Activated naive CD8-positive, alpha-beta T cell treated with anti-CD3 and anti-CD28 coated beads, Interleukin-2, amount 10 ng/mL, durations not matched to agents 7 days and 5 days (primary cell): ENCODE measurements at regions of chr16 and their contacts with region 1.

Region 1: GRCh38 chr16:84511180-84511824 is 6.8 kb upstream of the MEAK7 start:
- DNase-seq: peak; percentile 92
- ATAC-seq: peak; percentile 12
- H3K4me3 Mint-ChIP-seq: peak overlapping the region; percentile 66
- H3K27ac Mint-ChIP-seq: peak overlapping the region; percentile 81
- H3K4me1 Mint-ChIP-seq: peaks cover 70% of the 10 kb centered on the region
- H3K27me3 Mint-ChIP-seq: no peaks in the 10 kb centered on the region

Region 2: DNA sequence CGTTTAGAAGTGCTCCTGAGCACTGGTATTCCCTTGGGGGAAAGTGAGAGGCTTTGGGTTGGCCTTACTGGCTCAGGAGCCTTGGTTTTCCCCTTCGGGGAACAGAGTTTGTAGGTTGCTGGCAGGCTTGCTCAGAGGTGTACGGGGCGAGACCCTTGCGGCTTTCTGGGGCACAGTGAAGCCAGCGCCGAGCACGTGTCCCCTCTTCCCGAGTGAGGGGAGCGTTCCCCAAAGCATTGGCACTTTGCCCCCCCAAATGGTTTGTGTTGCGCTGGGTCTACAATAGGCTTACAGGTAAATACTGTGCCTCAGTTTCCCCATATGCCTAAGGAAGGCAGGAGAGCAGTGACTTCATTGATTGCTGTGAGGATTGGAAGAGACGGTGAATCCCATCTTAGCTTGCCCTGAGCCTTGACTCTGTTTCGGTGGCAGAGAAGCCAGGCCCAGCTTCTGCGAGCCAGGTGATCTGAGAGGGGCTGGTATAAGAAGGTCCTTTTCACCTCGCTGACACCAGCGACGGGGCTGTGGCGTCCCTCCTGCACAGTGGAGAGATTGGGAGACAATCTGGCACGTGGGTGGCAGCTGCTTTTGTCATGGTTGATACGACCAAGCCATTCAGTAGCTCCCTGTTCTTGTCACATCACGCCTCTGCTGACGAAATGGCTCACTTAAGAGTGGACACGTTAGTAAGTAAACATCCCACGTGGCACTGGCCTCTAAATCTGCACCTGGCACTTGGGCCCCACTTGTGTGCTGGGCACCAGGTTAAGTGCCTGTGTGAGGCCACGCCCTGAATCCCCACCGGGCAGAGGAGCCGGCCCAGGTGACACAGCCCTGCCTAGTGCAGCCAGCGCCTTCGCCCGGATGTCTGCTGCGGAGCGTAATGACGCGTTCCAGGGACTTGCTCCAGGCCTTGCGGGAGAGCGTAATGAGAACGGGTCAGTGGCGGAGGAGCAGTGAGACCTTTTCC is 61.8 kb before region 1 on chr16:
- POLR2A ChIA-PET with region 1: no interaction called
- DNase-seq: peak; percentile 29
- ATAC-seq: no peak
- H3K4me3 Mint-ChIP-seq: no peak overlapping the region
- H3K27ac Mint-ChIP-seq: no peak overlapping the region
- H3K4me1 Mint-ChIP-seq: no peaks in the 10 kb centered on the region
- H3K27me3 Mint-ChIP-seq: peaks cover 9% of the 10 kb centered on the region

Region 3: GRCh38 chr16:84526794-84527503 is 15.6 kb after region 1 on chr16:
- POLR2A ChIA-PET with region 1: interaction called, 11 read pairs
- DNase-seq: no peak
- ATAC-seq: no peak
- H3K4me3 Mint-ChIP-seq: no peak overlapping the region
- H3K27ac Mint-ChIP-seq: peak overlapping the region; percentile 46
- H3K4me1 Mint-ChIP-seq: peaks cover 43% of the 10 kb centered on the region
- H3K27me3 Mint-ChIP-seq: no peaks in the 10 kb centered on the region

Region 4: GRCh38 chr16:84548971-84549844 is 37.9 kb after region 1 on chr16:
- POLR2A ChIA-PET with region 1: interaction called, 94 read pairs
- DNase-seq: peak; percentile 63
- ATAC-seq: peak; percentile 48
- H3K4me3 Mint-ChIP-seq: peak overlapping the region; percentile 87
- H3K27ac Mint-ChIP-seq: peak overlapping the region; percentile 92
- H3K4me1 Mint-ChIP-seq: peaks cover 47% of the 10 kb centered on the region
- H3K27me3 Mint-ChIP-seq: no peaks in the 10 kb centered on the region

Region 5: DNA sequence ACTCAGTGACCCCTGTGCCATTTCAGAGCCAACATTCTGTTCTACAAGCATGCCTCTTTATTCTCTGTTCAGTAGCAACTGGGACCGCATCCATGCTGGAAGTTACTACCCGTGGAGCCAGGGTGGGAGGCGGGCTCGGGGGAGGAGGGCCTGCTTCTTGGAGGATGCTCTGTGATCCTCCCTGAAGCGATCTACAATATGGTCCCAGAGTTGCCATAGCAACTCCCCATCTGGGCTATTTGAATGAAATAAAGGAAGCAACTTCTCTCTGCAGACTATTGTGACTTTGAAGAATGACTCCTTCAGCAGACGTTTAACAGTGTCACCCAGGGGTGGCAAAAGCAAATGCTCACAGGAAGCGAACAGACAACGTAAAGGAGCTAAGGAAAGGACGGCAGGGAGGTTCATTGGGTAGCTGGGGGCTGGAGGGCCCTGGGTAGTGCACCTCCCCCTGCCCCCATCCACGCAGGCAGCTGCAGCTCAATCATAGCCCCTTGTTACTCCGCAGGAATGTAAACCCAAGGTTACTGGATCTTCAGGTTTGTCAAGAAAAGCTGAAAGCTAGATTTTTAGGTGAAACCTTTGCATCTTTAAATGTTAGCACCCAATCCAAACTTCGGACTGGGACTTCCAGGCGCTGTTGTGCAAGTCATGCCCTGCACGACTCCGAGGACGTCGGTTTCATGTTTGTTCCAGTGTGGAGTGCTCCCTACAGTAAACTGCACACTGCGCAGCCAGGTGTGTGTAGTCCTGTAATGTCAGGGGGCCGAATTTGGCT is 44.3 kb after region 1 on chr16:
- POLR2A ChIA-PET with region 1: interaction called, 94 read pairs
- DNase-seq: no peak
- ATAC-seq: no peak
- H3K4me3 Mint-ChIP-seq: peak overlapping the region; percentile 13
- H3K27ac Mint-ChIP-seq: peak overlapping the region; percentile 94
- H3K4me1 Mint-ChIP-seq: peaks cover 26% of the 10 kb centered on the region
- H3K27me3 Mint-ChIP-seq: no peaks in the 10 kb centered on the region

Region 6: GRCh38 chr16:84593825-84594724 is 82.8 kb after region 1 on chr16:
- POLR2A ChIA-PET with region 1: interaction called, 41 read pairs
- DNase-seq: peak; percentile 82
- ATAC-seq: peak; percentile 87
- H3K4me3 Mint-ChIP-seq: peak overlapping the region; percentile 86
- H3K27ac Mint-ChIP-seq: peak overlapping the region; percentile 85
- H3K4me1 Mint-ChIP-seq: peaks cover 65% of the 10 kb centered on the region
- H3K27me3 Mint-ChIP-seq: no peaks in the 10 kb centered on the region

Region 7: GRCh38 chr16:84599521-84600202 is 88.4 kb after region 1 on chr16:
- POLR2A ChIA-PET with region 1: interaction called, 41 read pairs
- DNase-seq: peak; percentile 63
- ATAC-seq: peak; percentile 37
- H3K4me3 Mint-ChIP-seq: peak overlapping the region; percentile 80
- H3K27ac Mint-ChIP-seq: peak overlapping the region; percentile 92
- H3K4me1 Mint-ChIP-seq: peaks cover 75% of the 10 kb centered on the region
- H3K27me3 Mint-ChIP-seq: no peaks in the 10 kb centered on the region

Region 8: GRCh38 chr16:84617791-84618580 is 106.7 kb after region 1 on chr16 and contains the start of gene COTL1:
- POLR2A ChIA-PET with region 1: interaction called, 20 read pairs
- DNase-seq: peak; percentile 95
- ATAC-seq: peak; percentile 79
- H3K4me3 Mint-ChIP-seq: peak within 1 kb of the TSS; percentile 96
- H3K27ac Mint-ChIP-seq: peak within 1 kb of the TSS; percentile 87
- H3K4me1 Mint-ChIP-seq: peaks cover 48% of the 10 kb centered on the region
- H3K27me3 Mint-ChIP-seq: peaks cover 1% of the 10 kb centered on the region
- total RNA-seq, gene COTL1: 657 to 664 TPM